CD4-positive, alpha-beta memory T cell (primary cell): ENCODE measurements at regions of chr5 and their contacts with region 1.

Region 1: DNA sequence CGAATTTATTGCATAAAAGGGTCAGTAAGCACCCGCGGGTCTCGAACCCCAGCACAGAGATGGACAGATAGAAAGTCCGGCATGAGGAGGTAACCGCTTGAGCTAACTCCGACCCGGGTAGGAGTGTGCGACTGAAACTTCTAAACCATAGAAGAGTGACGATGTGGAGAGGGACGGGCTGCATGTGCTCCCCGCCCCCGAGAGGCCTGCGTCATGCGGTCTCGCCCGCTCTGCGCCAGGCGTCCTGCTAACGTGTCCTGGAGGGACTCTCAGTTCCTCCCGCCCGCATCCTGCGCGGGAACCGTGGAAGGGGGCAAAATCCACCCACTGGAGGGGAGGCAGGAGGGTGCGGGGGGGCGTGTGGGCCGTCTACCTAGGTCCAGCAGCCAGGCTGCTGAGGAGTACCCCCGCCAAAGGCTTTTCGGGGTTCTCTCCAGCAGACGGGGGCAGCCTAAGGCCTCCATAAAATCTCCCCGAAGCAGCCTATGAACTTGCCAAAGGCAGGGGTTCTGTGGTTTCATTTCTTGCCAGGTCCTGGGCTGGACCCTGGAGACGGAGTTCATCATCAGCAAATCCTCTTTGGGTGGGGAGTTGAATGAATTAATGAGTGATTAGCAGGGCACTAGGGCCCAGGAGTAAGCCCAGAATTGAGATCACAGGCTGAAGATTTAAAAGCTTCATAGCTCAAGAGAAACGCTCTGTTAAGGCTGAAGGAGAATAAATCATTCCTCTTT is 51.9 kb downstream of the TGFBI start:
- DNase-seq: peak; percentile 51 to 76 (median 61)
- H3K4me3 ChIP-seq: peak overlapping the region; percentile 20 to 43
- H3K4me3 Mint-ChIP-seq: peak overlapping the region; percentile 80 to 92 (median 84)
- H3K27ac ChIP-seq: no peak overlapping the region
- H3K27ac Mint-ChIP-seq: peak overlapping the region in 5 of 7 donors; percentile 43 to 88 (median 83)
- H3K4me1 ChIP-seq: peaks cover 9% of the 10 kb centered on the region
- H3K4me1 Mint-ChIP-seq: peaks cover 7 to 13% (median 10%) of the 10 kb centered on the region in 4 donors
- H3K27me3 ChIP-seq: peaks cover 12% of the 10 kb centered on the region
- H3K27me3 Mint-ChIP-seq: peaks cover 24 to 29% of the 10 kb centered on the region in 2 donors

Region 2: DNA sequence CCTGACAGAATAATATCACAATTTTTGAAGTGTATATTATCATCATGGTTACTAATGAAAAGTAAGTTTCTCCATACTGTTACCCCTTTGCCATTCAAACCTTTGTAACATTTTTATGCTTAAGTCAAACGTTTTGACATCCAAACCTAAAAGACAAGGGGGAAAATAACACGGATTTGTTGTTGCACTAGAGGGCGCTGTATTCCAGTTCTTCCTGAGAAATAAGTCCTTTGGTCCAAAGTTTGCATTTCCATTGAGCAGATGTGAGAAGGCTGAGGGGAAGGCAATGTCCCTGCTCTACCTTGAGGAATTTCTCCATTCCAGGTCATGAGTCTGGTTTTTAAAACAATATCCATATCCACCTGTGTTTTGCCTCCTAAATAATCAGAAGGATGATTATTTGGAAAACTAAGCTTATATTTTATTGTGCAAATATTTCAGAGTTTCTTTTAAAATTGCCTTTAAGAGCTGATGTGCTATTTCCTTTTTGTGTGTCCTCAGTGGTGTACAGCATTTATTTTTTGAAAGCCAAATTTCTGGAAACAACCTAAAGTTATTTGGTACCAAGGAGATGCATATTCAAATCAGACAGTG is 135.6 kb before region 1 on chr5:
- CTCF ChIA-PET with region 1: interaction called, 41 read pairs
- POLR2A ChIA-PET with region 1: no interaction called
- intact Hi-C with region 1: no loop called
- DNase-seq: peak in 4 of 5 donors; percentile 33 to 44 (median 40)
- H3K4me3 ChIP-seq: no peak overlapping the region
- H3K4me3 Mint-ChIP-seq: no peak overlapping the region
- H3K27ac ChIP-seq: no peak overlapping the region
- H3K27ac Mint-ChIP-seq: no peak overlapping the region
- H3K4me1 ChIP-seq: no peaks in the 10 kb centered on the region
- H3K4me1 Mint-ChIP-seq: no peaks in the 10 kb centered on the region
- H3K27me3 ChIP-seq: no peaks in the 10 kb centered on the region
- H3K27me3 Mint-ChIP-seq: peaks cover 4 to 8% of the 10 kb centered on the region in 2 donors

Region 3: GRCh38 chr5:135977375-135977928 is 103.2 kb before region 1 on chr5:
- CTCF ChIA-PET with region 1: interaction called, 21 read pairs
- POLR2A ChIA-PET with region 1: no interaction called
- intact Hi-C with region 1: loop called (anchors 1 kb)
- DNase-seq: peak in 4 of 5 donors; percentile 29 to 51 (median 39)
- H3K4me3 ChIP-seq: no peak overlapping the region
- H3K4me3 Mint-ChIP-seq: no peak overlapping the region
- H3K27ac ChIP-seq: no peak overlapping the region
- H3K27ac Mint-ChIP-seq: no peak overlapping the region
- H3K4me1 ChIP-seq: no peaks in the 10 kb centered on the region
- H3K4me1 Mint-ChIP-seq: no peaks in the 10 kb centered on the region
- H3K27me3 ChIP-seq: no peaks in the 10 kb centered on the region
- H3K27me3 Mint-ChIP-seq: peaks cover 11 to 21% of the 10 kb centered on the region in 2 donors

Region 4: DNA sequence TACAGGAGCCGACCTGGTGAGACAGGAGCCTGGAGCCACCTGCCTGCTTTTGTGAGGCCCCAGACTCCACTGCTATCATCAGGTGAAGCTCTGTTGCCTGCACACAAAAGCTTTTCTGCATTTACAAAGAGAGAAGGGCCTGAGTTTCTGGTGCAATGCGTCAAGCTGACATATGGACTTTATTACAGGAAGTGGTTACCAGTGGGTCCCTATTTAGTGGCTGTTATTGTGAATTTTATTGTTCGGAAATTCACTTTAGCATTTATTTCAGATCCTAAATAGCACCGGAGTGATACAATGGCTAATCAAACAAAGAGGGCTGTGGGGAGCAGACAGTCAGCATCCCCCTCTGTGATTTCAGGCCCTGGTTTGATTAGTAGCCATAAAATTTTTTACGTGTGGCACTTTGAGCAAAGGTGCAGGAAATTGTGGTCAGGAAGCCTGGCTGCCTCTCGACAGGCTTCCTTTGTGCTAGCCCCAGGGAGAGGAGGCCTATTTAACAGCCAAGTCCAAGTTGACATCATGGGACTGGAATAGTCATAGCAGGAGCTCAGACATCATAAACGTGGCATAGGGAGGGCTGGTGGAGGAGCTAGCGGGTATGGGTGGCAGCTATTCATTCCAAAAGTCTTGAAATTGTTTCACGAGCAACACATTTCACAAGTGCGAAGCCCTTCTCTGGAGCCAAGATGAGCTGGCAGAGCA is 43.5 kb before region 1 on chr5:
- CTCF ChIA-PET with region 1: interaction called, 7 read pairs
- POLR2A ChIA-PET with region 1: interaction called, 3 read pairs
- intact Hi-C with region 1: loop called (anchors 5 kb)
- DNase-seq: peak; percentile 55 to 70 (median 63)
- H3K4me3 ChIP-seq: no peak overlapping the region
- H3K4me3 Mint-ChIP-seq: peak overlapping the region; percentile 4 to 83 (median 62)
- H3K27ac ChIP-seq: peak overlapping the region; percentile 20
- H3K27ac Mint-ChIP-seq: peak overlapping the region; percentile 86 to 97 (median 93)
- H3K4me1 ChIP-seq: peaks cover 46% of the 10 kb centered on the region
- H3K4me1 Mint-ChIP-seq: peaks cover 29 to 79% (median 44%) of the 10 kb centered on the region in 4 donors
- H3K27me3 ChIP-seq: no peaks in the 10 kb centered on the region
- H3K27me3 Mint-ChIP-seq: no peaks in the 10 kb centered on the region

Region 5: DNA sequence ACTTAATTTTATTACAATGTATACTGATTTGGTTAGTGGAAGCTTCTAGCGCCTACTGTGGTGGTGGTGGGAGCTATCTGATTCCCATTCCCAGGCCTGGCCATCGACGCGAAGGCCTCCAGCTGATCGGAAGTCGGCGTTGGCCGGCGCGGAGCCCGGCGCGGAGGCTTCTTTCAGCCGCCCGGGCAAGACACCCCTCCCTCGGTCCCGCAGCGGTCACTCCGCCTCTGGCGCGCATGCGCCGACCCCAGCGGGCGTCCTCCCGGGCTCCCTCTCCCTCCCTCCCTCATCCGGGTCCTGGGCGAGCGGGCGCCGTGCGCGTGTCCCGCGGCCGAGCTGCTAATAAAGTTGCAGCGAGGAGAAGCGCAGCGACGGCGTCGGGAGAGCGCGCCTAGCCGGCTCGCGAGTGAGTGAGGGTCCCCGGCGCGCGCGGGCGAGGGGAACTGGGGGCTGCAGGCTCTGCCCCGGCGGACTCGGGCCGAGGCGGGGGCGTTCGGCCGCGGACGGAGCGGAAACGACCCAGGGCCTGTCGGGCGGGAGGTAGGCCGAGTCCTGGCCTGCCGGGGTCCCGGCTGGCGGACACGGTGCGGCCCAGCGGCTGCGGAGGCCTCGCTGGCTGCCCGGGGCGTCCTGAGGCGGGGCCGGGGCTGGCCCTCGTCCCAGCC is 52.0 kb after region 1 on chr5 and contains the start of gene SMAD5:
- CTCF ChIA-PET with region 1: interaction called, 3 read pairs
- POLR2A ChIA-PET with region 1: no interaction called
- intact Hi-C with region 1: loop called (anchors 2 kb)
- DNase-seq: peak; percentile 74 to 80 (median 78)
- H3K4me3 ChIP-seq: peak within 1 kb of the TSS; percentile 70 to 77
- H3K4me3 Mint-ChIP-seq: peak within 1 kb of the TSS; percentile 93 to 98 (median 95)
- H3K27ac ChIP-seq: peak within 1 kb of the TSS; percentile 65
- H3K27ac Mint-ChIP-seq: peak within 1 kb of the TSS; percentile 87 to 94 (median 92)
- H3K4me1 ChIP-seq: peaks cover 24% of the 10 kb centered on the region
- H3K4me1 Mint-ChIP-seq: peaks cover 19 to 37% (median 27%) of the 10 kb centered on the region in 4 donors
- H3K27me3 ChIP-seq: no peaks in the 10 kb centered on the region
- H3K27me3 Mint-ChIP-seq: peaks cover 3 to 13% of the 10 kb centered on the region in 2 donors
- total RNA-seq, gene SMAD5: 25.7 to 27.3 TPM